Cardiac septum (tissue), 1 donor: ENCODE measurements at regions of chr22 and their contacts with region 1.

Region 1: DNA sequence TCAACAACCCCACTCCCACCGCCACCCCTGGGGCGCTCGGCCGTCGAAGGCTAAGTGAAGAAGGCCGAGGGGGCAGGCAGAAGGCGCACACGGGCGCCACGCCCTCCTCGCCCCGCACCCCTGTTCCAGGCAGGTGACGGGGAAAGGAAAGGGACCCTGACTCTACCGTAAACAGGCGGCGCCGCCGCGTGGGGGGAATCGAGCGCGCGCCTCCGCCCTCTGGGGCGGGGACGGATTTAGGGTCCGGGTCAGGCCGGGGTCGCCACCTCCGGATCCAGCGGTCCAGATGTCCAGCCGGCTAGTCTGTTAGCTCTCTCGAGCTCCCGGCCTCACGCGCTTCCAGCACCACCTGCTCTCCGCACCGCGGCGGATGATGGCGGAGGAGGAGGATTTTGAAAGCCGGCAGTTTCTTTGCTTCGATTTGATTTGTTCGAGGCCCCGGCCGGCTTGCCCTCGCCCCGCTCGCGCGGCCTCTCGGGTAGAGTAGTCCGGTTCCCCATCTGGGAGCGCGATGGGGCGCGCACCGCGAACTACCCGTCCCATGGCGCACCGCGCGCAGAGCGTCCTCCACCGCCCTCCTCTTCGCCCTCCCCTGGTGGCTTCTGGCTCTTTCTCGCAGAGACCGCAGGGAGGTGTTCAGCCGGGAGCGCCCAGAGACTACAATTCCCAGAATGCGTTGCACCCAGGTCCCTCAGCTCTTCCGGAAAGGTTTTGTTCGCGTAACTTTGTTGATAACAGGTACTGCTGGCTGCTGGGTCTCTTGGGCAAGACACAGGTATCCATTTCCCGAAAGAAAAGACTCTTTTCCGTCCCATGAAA is at the start of gene RANGAP1:
- DNase-seq: peak; percentile 100
- total RNA-seq, gene RANGAP1: 32.8 TPM

Region 2: GRCh38 chr22:41099036-41099435 is 187.0 kb before region 1 on chr22:
- intact Hi-C with region 1: no loop called
- DNase-seq: no peak

Region 3: DNA sequence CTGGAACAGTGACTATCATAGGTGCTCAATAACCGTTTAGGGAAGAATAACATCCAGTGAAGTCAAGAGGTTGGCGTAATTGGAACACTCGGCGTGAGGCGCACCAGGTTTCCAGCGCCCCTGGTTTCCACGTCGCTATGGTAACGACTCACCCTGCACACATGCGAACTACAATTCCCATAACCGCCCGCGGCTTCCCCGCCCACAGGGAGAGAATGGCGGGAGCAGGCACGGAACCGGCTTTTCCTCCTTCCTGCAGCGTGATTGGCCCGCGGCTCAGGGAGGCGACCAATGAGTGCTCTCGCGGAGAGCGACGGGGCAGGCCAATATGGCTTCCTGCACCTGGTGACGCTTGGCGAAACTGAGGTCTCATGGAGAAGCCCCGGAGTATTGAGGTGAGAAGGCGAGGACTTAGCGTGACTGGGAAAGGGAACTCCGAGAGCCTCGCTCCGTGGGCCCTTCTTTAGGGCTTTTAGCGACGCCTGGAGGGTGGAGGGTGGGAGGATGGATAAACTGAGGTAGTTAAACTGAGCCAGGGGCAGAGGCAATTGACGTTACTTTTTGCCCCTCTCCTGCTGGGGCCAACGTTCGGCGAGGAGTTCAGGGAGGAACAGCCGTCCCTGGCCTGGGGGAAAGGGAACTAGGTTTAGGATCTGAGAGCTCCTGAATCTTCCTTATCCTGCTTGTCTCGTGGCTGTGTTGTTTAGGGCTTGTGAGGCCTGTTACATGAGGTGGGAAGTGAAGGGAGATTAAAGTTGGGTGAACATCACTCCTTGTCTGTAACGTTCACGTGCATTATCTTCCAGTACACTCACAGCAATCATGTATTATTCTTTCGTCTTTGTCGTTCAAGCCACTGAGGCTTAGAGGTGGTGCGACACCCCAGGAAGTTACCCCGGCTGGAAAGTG is 80.8 kb before region 1 on chr22 and contains the start of gene L3MBTL2:
- intact Hi-C with region 1: loop called (anchors 5 kb)
- DNase-seq: peak; percentile 99
- total RNA-seq, gene L3MBTL2: 14.2 TPM

Region 4: DNA sequence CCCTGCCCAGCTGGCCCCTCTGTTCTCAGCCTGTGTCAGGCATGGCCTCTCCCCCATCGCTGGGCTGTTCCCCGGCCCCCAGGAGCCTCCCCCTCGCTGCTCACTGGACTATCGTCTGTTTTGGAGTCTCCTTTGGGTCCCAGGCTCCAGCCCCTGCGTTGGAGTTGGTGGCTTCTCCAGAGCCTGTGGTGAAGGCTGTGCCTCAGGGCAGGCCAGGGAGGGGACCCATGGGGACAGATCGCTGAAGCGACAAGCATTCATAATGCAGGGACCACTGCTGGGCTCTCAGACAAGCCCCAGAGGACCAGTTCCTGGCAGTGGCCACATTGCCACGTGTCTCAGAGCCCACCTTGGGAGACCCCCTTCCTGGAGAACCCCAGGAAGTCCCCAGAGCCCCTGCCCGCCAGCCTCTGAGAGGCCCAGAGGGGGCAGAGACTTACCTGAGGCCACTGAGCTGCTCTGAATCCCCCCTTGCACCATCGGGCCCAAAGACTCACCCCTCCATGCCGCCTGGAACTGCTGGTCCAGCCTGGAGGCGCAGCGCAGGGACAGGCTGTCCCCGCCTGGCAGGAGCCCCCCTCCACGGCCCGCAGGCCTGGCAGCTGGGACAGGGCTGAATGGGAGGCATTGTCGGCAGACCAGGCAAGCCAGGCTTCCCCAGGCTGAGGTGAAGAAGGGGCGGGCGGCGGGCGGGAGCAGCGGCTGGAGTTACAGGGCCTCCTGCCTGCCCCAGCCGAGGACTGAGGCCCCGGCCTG is 45.5 kb before region 1 on chr22 and contains the start of gene CHADL:
- intact Hi-C with region 1: no loop called
- DNase-seq: no peak
- total RNA-seq, gene CHADL: 2.9 TPM

Region 5: GRCh38 chr22:41301105-41302020 is 15.3 kb after region 1 on chr22 and contains the start of gene ZC3H7B:
- intact Hi-C with region 1: loop called (anchors 2 kb)
- DNase-seq: peak; percentile 94
- total RNA-seq, gene ZC3H7B: 37.2 TPM

Region 6: GRCh38 chr22:41381329-41382097 is 95.5 kb after region 1 on chr22 and contains the start of gene TEF:
- intact Hi-C with region 1: loop called (anchors 5 kb)
- DNase-seq: peak; percentile 98
- total RNA-seq, gene TEF: 14.0 TPM

Region 7: DNA sequence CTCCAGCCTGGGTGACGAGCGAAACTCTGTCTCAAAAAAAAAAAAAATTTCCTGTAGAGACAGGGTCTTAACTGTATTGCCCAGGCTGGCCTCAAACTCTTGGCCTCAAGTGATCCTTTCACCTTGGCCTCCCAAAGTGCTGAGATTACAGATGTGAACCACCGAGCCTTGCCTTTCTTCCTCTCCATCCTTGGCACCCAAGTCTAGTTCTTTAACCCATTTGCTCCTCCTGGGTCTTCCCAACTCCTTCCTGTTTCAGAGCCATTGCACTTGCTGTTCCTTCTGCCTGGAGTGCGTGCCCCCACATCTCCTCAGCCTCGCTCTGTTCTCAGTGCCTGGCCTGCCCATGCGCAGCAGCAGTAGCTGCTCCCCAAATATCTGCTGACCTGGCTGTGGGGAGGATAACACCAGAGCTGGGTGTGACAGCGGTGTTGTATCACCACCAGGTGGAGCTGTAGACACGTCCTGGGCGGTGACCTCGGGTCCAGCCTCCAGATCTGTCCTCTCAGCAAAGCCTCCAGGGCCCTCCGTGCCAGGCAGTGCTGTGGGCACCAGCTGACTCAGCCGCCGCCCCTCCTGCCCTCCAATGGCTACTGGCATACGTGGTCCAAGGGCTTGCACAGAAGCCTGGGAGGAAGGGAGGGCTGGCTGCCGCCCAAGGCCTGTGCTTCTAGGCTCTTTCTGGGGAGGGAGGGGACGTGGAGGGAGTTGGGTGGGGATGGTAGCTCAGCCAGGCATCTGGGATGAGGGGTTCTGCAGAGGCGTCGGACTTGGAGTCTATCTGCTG is 117.7 kb after region 1 on chr22:
- intact Hi-C with region 1: no loop called
- DNase-seq: peak; percentile 95

Region 8: DNA sequence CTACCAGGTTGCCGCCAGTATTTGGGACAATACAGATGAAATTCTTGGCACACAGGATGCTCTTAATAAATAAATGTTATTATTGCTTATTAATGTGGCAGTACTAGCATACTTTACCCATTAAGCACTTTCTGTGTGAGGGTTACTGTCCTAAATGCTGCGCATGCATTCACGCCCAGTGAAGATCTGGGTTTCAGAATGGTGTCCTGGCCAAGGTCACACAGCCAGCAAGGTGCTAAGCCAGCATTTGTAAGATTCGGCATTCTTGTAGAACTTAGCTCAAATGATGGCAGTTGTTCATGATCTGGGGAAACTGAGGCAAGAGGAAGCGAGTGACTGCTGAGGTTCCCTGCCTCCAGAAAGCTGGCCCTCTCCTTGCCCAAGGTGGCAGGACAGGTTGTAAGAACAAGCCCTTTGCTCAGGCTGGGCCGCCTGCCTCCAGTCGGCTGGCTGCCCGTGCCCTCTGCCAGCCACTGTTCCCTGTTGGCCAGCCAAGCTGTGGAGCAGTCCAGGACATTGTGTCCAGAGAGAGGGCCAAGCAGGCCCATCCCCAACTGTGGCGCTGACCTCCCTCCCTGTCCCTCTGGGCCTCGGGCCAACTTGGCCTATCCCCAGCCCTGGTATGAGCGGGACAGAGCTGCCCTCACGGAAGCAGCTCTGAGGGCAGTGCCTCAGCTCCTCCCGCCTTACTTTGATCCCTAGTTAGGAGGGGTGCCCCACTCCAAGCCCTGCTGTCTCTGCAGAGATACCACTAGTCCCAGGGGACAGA is 131.8 kb after region 1 on chr22:
- intact Hi-C with region 1: no loop called
- DNase-seq: peak; percentile 94